CD4-positive, alpha-beta memory T cell (primary cell): ENCODE measurements at regions of chr12 and their contacts with region 1.

Region 1: DNA sequence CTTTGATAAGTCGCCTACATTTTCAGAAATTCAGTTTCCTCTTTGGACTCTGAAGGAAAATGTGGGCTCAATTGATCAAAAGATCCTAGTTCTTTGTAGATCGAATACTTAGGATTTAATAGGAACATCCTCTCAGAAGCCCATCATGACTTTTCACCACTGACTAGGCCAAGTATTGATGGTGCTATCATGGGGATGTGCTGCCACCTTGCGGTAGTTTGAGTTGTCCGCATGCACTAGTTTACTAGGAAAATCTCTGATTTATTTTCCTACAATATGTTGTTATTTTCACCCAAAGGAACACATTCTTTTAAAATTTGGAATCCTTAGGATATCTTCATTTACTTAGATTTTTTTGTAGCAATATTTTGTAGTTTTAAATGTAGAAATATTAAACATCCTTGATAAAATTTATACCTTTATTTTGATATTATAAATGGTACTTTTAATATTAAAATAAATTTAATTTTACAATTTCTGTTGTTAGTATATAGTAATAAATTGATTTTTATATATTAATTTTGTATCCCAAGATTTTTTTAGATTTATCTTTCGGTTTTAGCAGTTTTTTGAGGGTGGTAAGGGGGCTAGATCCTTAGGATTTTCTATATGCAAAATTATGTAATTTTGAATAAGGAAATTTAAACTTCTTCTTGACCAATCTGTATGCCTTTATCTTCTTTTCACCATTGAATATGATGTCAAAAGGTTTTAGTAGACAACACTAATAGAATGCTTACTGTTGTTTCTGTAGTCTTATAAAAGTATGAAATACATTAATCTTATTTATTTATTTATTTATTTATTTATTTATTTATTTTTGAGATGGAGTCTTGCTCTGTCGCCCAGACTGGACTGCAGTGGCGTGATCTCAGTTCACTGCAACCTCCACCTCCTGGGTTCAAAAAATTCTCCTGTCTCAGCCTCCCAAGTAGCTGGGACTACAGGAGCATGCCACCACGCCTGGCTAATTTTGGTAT is 52.9 kb upstream of the OR9K2 start:
- DNase-seq: peak; percentile 69 to 79 (median 71)
- H3K4me3 ChIP-seq: no peak overlapping the region
- H3K4me3 Mint-ChIP-seq: no peak overlapping the region
- H3K27ac ChIP-seq: no peak overlapping the region
- H3K27ac Mint-ChIP-seq: peak overlapping the region in 1 of 7 donors; percentile 24
- H3K4me1 ChIP-seq: no peaks in the 10 kb centered on the region
- H3K4me1 Mint-ChIP-seq: peaks cover 0 to 3% (median 1%) of the 10 kb centered on the region in 4 donors
- H3K27me3 ChIP-seq: peaks cover 5% of the 10 kb centered on the region
- H3K27me3 Mint-ChIP-seq: peaks cover 10 to 30% of the 10 kb centered on the region in 2 donors

Region 2: GRCh38 chr12:54603173-54603814 is 470.0 kb before region 1 on chr12:
- CTCF ChIA-PET with region 1: interaction called, 3 read pairs
- POLR2A ChIA-PET with region 1: no interaction called
- intact Hi-C with region 1: loop called (anchors 2 kb)
- DNase-seq: peak; percentile 54 to 70 (median 60)
- H3K4me3 ChIP-seq: no peak overlapping the region
- H3K4me3 Mint-ChIP-seq: no peak overlapping the region
- H3K27ac ChIP-seq: no peak overlapping the region
- H3K27ac Mint-ChIP-seq: peak overlapping the region in 2 of 7 donors; percentile 15 to 17
- H3K4me1 ChIP-seq: no peaks in the 10 kb centered on the region
- H3K4me1 Mint-ChIP-seq: peaks cover 0 to 7% (median 6%) of the 10 kb centered on the region in 4 donors
- H3K27me3 ChIP-seq: no peaks in the 10 kb centered on the region
- H3K27me3 Mint-ChIP-seq: peaks cover 5 to 17% of the 10 kb centered on the region in 2 donors

Region 3: GRCh38 chr12:54740882-54741281 is 332.5 kb before region 1 on chr12:
- CTCF ChIA-PET with region 1: interaction called, 45 read pairs
- POLR2A ChIA-PET with region 1: no interaction called
- intact Hi-C with region 1: no loop called
- DNase-seq: peak in 4 of 5 donors; percentile 36 to 64 (median 52)
- H3K4me3 ChIP-seq: no peak overlapping the region
- H3K4me3 Mint-ChIP-seq: peak overlapping the region; percentile 26 to 78 (median 60)
- H3K27ac ChIP-seq: no peak overlapping the region
- H3K27ac Mint-ChIP-seq: peak overlapping the region; percentile 41 to 86 (median 63)
- H3K4me1 ChIP-seq: peaks cover 56% of the 10 kb centered on the region
- H3K4me1 Mint-ChIP-seq: peaks cover 52 to 95% (median 66%) of the 10 kb centered on the region in 4 donors
- H3K27me3 ChIP-seq: no peaks in the 10 kb centered on the region
- H3K27me3 Mint-ChIP-seq: no peaks in the 10 kb centered on the region

Region 4: DNA sequence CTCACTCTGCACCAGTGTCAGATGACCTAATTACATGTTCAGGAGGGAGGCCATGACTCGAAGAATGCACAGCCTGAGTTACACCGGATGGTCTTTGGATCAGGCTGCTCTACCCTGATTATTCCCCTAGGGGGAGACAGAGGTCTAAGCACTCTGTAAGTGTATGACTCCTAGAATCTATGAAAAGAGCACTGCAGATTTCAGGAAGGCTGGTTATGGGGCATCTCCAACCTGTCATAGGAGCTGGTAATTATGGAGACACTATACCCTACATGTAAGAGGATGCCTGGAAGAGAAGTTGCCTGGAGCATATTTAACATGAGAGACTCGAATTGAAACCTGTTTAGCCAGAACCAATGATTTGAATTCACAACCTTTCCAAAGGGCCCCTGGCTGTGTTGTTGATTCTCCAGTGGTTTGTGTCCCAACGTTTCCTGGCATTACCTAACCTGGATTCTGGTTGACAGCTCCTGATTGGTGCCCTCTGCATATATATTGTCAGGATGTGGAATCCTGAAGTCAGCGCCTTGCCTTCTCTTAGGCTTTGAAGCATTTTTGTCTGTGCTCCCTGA is 219.3 kb before region 1 on chr12 and contains the start of gene MUCL1:
- CTCF ChIA-PET with region 1: interaction called, 45 read pairs
- POLR2A ChIA-PET with region 1: no interaction called
- intact Hi-C with region 1: loop called (anchors 1 kb)
- DNase-seq: peak; percentile 67 to 74 (median 69)
- H3K4me3 ChIP-seq: no peak within 1 kb of the TSS
- H3K4me3 Mint-ChIP-seq: no peak within 1 kb of the TSS
- H3K27ac ChIP-seq: no peak within 1 kb of the TSS
- H3K27ac Mint-ChIP-seq: peak within 1 kb of the TSS in 1 of 7 donors; percentile 55
- H3K4me1 ChIP-seq: no peaks in the 10 kb centered on the region
- H3K4me1 Mint-ChIP-seq: no peaks in the 10 kb centered on the region
- H3K27me3 ChIP-seq: no peaks in the 10 kb centered on the region
- H3K27me3 Mint-ChIP-seq: no peaks in the 10 kb centered on the region
- total RNA-seq, gene MUCL1: not detected

Region 5: DNA sequence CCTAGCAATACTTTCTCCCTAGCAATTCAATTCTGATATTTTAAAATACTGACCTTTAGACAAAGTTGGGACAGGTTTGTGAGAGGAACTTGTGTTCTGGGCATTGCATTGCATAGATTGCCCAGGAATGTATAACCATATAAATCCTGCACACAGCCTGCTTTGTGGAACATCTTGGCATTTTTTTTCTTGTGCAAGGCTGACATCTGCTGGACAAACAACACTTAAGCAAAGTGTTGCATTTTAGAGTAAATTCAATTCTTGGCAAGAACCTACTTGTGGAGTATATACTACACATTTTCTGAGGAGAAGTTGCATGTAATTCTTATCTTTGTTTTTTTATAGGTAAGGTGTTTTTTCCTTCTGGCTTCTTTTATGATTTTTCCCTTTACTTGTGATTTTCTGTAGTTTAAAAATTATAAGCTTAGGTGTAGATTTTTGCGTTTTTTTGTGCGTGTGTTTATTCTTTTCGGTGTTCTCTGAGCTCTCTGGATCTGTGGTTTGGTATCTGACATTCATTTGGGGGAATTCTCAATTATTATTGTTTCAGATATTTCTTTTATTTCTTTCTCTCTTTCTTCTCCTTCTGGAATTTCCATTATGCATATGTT is 115.2 kb before region 1 on chr12:
- CTCF ChIA-PET with region 1: interaction called, 24 read pairs
- POLR2A ChIA-PET with region 1: no interaction called
- intact Hi-C with region 1: loop called (anchors 1 kb)
- DNase-seq: peak; percentile 55 to 68 (median 61)
- H3K4me3 ChIP-seq: no peak overlapping the region
- H3K4me3 Mint-ChIP-seq: peak overlapping the region in 5 of 8 donors; percentile 2 to 65 (median 18)
- H3K27ac ChIP-seq: no peak overlapping the region
- H3K27ac Mint-ChIP-seq: peak overlapping the region; percentile 37 to 84 (median 74)
- H3K4me1 ChIP-seq: peaks cover 85% of the 10 kb centered on the region
- H3K4me1 Mint-ChIP-seq: peaks cover 71 to 94% (median 84%) of the 10 kb centered on the region in 4 donors
- H3K27me3 ChIP-seq: no peaks in the 10 kb centered on the region
- H3K27me3 Mint-ChIP-seq: no peaks in the 10 kb centered on the region

Region 6: GRCh38 chr12:54984658-54985376 is 88.5 kb before region 1 on chr12 and contains the start of gene TESPA1:
- CTCF ChIA-PET with region 1: interaction called, 74 read pairs
- POLR2A ChIA-PET with region 1: interaction called, 12 read pairs
- intact Hi-C with region 1: no loop called
- DNase-seq: peak; percentile 86 to 94 (median 90)
- H3K4me3 ChIP-seq: peak within 1 kb of the TSS; percentile 66 to 86
- H3K4me3 Mint-ChIP-seq: peak within 1 kb of the TSS; percentile 89 to 99 (median 95)
- H3K27ac ChIP-seq: peak within 1 kb of the TSS; percentile 92
- H3K27ac Mint-ChIP-seq: peak within 1 kb of the TSS; percentile 97 to 100 (median 98)
- H3K4me1 ChIP-seq: peaks cover 71% of the 10 kb centered on the region
- H3K4me1 Mint-ChIP-seq: peaks cover 53 to 97% (median 64%) of the 10 kb centered on the region in 4 donors
- H3K27me3 ChIP-seq: no peaks in the 10 kb centered on the region
- H3K27me3 Mint-ChIP-seq: no peaks in the 10 kb centered on the region
- total RNA-seq, gene TESPA1: 269 to 287 TPM

Region 7: GRCh38 chr12:55060470-55060869 is 12.9 kb before region 1 on chr12:
- CTCF ChIA-PET with region 1: interaction called, 17 read pairs
- POLR2A ChIA-PET with region 1: no interaction called
- intact Hi-C with region 1: no loop called
- DNase-seq: no peak
- H3K4me3 ChIP-seq: no peak overlapping the region
- H3K4me3 Mint-ChIP-seq: no peak overlapping the region
- H3K27ac ChIP-seq: no peak overlapping the region
- H3K27ac Mint-ChIP-seq: no peak overlapping the region
- H3K4me1 ChIP-seq: no peaks in the 10 kb centered on the region
- H3K4me1 Mint-ChIP-seq: peaks cover 0 to 1% (median 0%) of the 10 kb centered on the region in 4 donors
- H3K27me3 ChIP-seq: no peaks in the 10 kb centered on the region
- H3K27me3 Mint-ChIP-seq: peaks cover 3 to 4% of the 10 kb centered on the region in 2 donors

Region 8: GRCh38 chr12:55092579-55092978 is 19.2 kb after region 1 on chr12:
- CTCF ChIA-PET with region 1: no interaction called
- POLR2A ChIA-PET with region 1: no interaction called
- intact Hi-C with region 1: no loop called
- DNase-seq: no peak
- H3K4me3 ChIP-seq: no peak overlapping the region
- H3K4me3 Mint-ChIP-seq: no peak overlapping the region
- H3K27ac ChIP-seq: no peak overlapping the region
- H3K27ac Mint-ChIP-seq: no peak overlapping the region
- H3K4me1 ChIP-seq: no peaks in the 10 kb centered on the region
- H3K4me1 Mint-ChIP-seq: no peaks in the 10 kb centered on the region
- H3K27me3 ChIP-seq: no peaks in the 10 kb centered on the region
- H3K27me3 Mint-ChIP-seq: peaks cover 12 to 23% of the 10 kb centered on the region in 2 donors